ENCODE measurements at regions of chr3 and their contacts with region 1.

Region 1: DNA sequence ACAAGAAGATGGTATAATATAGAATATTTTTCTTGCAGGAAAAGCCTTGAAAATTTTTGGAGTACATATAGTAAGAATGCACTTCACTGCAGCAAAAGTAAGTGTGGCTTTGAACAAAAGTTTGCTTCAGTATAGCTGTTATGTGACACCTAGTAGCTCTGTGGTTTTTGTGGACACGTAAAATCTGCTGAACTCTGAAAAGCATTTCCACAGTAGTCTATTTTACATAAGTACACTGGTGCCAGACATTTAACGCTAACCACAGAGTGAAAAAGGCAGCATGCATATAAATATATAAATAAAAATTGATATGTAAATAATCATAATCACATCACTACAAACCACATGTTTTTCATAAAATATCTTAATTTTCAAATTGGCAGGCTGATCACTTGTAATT is 39.8 kb downstream of the CGGBP1 start:
- DNase-seq: no peak
- ATAC-seq: no peak
- H3K4me3 ChIP-seq: no peak overlapping the region
- H3K27ac ChIP-seq: no peak overlapping the region
- H3K4me1 ChIP-seq: no peaks in the 10 kb centered on the region
- H3K27me3 ChIP-seq: no peaks in the 10 kb centered on the region
- CTCF ChIP-seq: no peak

Region 2: GRCh38 chr3:87307803-87308202 is 711.2 kb before region 1 on chr3:
- intact Hi-C with region 1: loop called in 1 of 3 experiments (anchors 10 kb)
- DNase-seq: no peak
- ATAC-seq: peak in 1 of 4 donors; percentile 40
- H3K4me3 ChIP-seq: no peak overlapping the region
- H3K27ac ChIP-seq: no peak overlapping the region
- H3K4me1 ChIP-seq: no peaks in the 10 kb centered on the region
- H3K27me3 ChIP-seq: no peaks in the 10 kb centered on the region
- CTCF ChIP-seq: no peak

Measured in pancreas (tissue), 10 donors.